Sigmoid colon (tissue), 7 donors: ENCODE measurements at regions of chr20 and their contacts with region 1.

Region 1: GRCh38 chr20:25390538-25391528 is at the start of gene ABHD12:
- DNase-seq: peak; percentile 98
- H3K4me3 ChIP-seq: peak within 1 kb of the TSS; percentile 71 to 95 (median 76)
- H3K27ac ChIP-seq: peak within 1 kb of the TSS; percentile 90 to 97 (median 94)
- H3K4me1 ChIP-seq: peaks cover 0 to 17% (median 13%) of the 10 kb centered on the region in 4 donors
- H3K27me3 ChIP-seq: no peaks in the 10 kb centered on the region
- CTCF ChIP-seq: no peak
- EP300 ChIP-seq: no peak
- POLR2A ChIP-seq: peak; percentile 22 to 70
- total RNA-seq, gene ABHD12: 18.9 to 39.6 (median 34.9) TPM

Region 2: DNA sequence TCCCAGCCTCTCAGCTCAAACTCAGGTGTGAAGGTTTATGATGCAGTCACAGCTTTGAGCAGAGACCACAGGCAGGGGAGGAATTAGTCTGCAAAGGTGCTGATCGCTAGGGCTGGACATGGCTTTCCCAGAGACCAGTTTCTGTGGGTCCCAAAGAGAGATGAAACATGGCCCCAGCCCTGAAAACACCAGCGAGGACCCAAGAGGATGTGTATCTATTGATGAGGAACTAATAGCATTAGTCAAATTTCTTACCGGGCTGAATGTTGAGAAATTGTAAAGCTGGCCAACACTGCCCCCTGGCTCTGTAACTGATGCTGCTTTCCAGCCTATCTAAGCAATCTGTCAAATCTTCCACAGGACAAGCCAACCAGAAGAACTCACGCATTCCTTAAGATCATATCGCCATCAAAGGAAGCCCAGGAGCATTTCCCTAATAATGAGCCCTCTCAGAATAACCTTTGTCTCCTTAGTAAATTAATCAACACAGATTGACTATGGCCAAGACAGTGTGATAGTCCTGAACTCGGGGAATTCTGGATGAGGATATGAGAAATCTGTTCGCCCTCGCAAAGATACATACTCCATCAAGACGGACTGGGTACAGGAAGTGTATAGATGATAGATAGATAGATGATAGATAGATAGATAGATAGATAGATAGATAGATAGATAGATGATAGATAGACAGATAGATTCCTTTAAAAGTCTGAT is 325.1 kb before region 1 on chr20:
- intact Hi-C with region 1: loop called (anchors 5 kb)
- DNase-seq: peak; percentile 81
- H3K4me3 ChIP-seq: no peak overlapping the region
- H3K27ac ChIP-seq: no peak overlapping the region
- H3K4me1 ChIP-seq: peaks cover 0 to 7% (median 3%) of the 10 kb centered on the region in 4 donors
- H3K27me3 ChIP-seq: peaks cover 0 to 9% (median 0%) of the 10 kb centered on the region in 3 donors
- CTCF ChIP-seq: peak; percentile 75 to 89 (median 84)
- EP300 ChIP-seq: no peak
- POLR2A ChIP-seq: no peak

Region 3: DNA sequence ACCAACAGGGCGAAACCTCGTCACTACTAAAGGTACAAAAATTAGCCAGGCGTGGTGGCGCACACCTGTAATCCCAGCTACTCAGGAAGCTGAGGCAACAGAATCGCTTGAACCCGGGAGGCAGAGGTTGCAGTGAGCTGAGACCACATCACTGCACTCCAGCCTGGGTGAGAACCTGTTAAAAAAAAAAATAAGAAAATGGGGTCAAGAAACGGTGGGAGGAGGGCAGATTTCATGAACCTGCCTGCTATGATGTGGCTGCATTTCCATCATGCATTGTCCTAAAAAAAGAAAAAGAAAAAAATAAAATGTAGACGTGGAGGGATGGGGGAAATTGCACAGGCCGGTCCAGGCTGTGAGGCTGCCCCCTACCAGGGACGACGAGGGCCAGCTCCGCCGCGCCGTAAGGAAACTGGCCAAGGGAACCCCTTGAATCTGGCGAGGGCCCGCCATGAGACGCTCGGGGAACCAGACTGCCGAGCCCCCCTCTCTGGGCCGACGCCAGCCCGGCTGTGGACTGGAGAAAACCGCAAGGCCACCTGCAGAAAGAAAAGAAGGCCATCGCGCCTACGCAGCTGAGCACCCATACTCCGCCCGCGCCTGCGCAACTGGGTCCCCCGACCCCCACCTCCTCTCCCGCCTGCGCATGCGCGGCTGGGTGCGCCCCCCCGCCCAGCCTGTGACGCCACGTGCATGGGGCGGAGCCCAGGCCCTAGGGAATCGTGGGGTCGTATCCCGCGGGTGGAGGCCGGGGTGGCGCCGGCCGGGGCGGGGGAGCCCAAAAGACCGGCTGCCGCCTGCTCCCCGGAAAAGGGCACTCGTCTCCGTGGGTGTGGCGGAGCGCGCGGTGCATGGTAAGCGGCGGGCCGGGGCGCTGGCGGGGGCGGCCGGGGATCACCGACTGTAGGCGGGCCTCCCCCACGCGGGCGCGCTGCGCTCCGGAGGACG is 195.5 kb before region 1 on chr20 and contains the start of gene ENTPD6:
- intact Hi-C with region 1: loop called (anchors 5 kb)
- DNase-seq: peak; percentile 97
- H3K4me3 ChIP-seq: peak within 1 kb of the TSS; percentile 82 to 96 (median 92)
- H3K27ac ChIP-seq: peak within 1 kb of the TSS; percentile 87 to 92 (median 90)
- H3K4me1 ChIP-seq: peaks cover 0 to 53% (median 44%) of the 10 kb centered on the region in 4 donors
- H3K27me3 ChIP-seq: no peaks in the 10 kb centered on the region
- CTCF ChIP-seq: peak in 2 of 4 experiments; percentile 15 to 32
- EP300 ChIP-seq: peak in 1 of 4 donors; percentile 45
- POLR2A ChIP-seq: peak; percentile 82 to 85
- total RNA-seq, gene ENTPD6: 26.0 to 48.2 (median 37.2) TPM

Region 4: GRCh38 chr20:25310268-25310920 is 80.4 kb before region 1 on chr20:
- intact Hi-C with region 1: loop called (anchors 2 kb)
- DNase-seq: peak; percentile 85
- H3K4me3 ChIP-seq: peak overlapping the region in 3 of 4 donors; percentile 0 to 24 (median 15)
- H3K27ac ChIP-seq: peak overlapping the region; percentile 73 to 82 (median 80)
- H3K4me1 ChIP-seq: peaks cover 0 to 31% (median 27%) of the 10 kb centered on the region in 4 donors
- H3K27me3 ChIP-seq: no peaks in the 10 kb centered on the region
- CTCF ChIP-seq: peak; percentile 46 to 63 (median 56)
- EP300 ChIP-seq: no peak
- POLR2A ChIP-seq: no peak

Region 5: DNA sequence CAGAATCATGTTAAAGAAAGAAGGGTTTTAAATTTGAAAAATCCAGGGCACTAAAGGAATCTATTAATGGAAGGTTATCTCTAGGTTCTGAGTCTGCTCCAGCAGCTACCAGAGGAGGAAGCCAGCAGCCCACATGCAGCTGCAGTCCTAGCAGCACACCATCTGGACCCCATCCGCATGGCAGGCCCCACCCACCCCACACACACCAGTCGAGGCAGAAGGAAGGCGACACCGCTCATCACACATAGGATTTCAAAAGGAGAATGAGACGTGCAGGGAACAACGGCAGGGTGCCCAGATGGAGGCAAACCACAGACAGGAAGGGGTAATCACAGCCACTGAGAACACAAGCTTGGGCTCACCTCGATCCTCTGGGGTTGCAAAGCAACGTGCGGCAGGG is 95.5 kb after region 1 on chr20:
- intact Hi-C with region 1: no loop called
- DNase-seq: no peak
- H3K4me3 ChIP-seq: no peak overlapping the region
- H3K27ac ChIP-seq: no peak overlapping the region
- H3K4me1 ChIP-seq: no peaks in the 10 kb centered on the region
- H3K27me3 ChIP-seq: no peaks in the 10 kb centered on the region
- CTCF ChIP-seq: no peak
- EP300 ChIP-seq: no peak
- POLR2A ChIP-seq: no peak

Region 6: DNA sequence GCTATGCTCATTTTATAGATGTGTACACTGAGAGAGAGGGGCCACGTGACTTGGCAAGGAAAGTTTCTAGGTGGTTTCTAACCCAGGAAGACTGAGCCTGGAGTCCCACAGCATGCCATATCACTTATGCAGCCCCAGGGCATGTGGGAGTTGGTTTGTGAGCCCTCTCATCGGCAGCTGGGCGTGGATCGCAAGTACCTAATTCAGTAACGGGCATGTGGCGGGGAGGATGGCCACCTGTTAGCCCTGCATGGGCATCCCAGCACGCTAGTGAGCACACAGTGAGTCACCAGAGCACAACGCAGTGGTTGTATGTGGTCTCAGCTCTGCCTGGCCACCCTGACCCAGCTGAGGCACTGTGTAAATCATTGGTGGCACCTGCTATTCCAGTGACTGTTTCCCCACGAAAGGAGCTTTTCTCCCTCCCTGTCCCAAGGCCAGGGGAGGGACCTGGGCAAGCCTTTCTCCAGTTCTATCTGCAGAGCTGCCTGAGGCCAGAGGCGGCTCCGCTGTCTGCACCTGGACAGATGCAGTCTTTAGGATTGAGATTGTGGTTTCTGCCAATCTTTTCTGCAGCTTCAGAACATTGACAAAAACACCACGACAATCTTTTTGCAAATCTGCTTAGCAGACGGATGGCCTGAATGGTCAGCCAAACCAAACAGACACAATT is 106.3 kb after region 1 on chr20:
- intact Hi-C with region 1: no loop called
- DNase-seq: no peak
- H3K4me3 ChIP-seq: no peak overlapping the region
- H3K27ac ChIP-seq: no peak overlapping the region
- H3K4me1 ChIP-seq: no peaks in the 10 kb centered on the region
- H3K27me3 ChIP-seq: no peaks in the 10 kb centered on the region
- CTCF ChIP-seq: no peak
- EP300 ChIP-seq: no peak
- POLR2A ChIP-seq: no peak

Region 7: GRCh38 chr20:25584905-25585704 is 194.3 kb after region 1 on chr20 and contains the start of gene NINL:
- intact Hi-C with region 1: no loop called
- DNase-seq: peak; percentile 78
- H3K4me3 ChIP-seq: peak within 1 kb of the TSS; percentile 79 to 84 (median 82)
- H3K27ac ChIP-seq: peak within 1 kb of the TSS; percentile 80 to 81 (median 80)
- H3K4me1 ChIP-seq: peaks cover 0 to 26% (median 16%) of the 10 kb centered on the region in 4 donors
- H3K27me3 ChIP-seq: no peaks in the 10 kb centered on the region
- CTCF ChIP-seq: no peak
- EP300 ChIP-seq: no peak
- POLR2A ChIP-seq: peak in 1 of 2 donors; percentile 21
- total RNA-seq, gene NINL: 9.6 to 19.9 (median 12.8) TPM